Activated B cell treated with CpG ODN at 0.5 μM for 24 hours (primary cell): ENCODE measurements at regions of chr15 and their contacts with region 1.

Region 1: GRCh38 chr15:40440743-40441564 is at the start of gene BAHD1:
- DNase-seq: peak; percentile 93
- ATAC-seq: peak; percentile 92
- H3K4me3 Mint-ChIP-seq: peak within 1 kb of the TSS; percentile 88
- H3K27ac Mint-ChIP-seq: peak within 1 kb of the TSS; percentile 68
- H3K4me1 Mint-ChIP-seq: peaks cover 59% of the 10 kb centered on the region
- H3K27me3 Mint-ChIP-seq: peaks cover 22% of the 10 kb centered on the region
- CTCF ChIP-seq: no peak
- total RNA-seq, gene BAHD1: 27.5 and 28.4 TPM in 2 replicates

Region 2: DNA sequence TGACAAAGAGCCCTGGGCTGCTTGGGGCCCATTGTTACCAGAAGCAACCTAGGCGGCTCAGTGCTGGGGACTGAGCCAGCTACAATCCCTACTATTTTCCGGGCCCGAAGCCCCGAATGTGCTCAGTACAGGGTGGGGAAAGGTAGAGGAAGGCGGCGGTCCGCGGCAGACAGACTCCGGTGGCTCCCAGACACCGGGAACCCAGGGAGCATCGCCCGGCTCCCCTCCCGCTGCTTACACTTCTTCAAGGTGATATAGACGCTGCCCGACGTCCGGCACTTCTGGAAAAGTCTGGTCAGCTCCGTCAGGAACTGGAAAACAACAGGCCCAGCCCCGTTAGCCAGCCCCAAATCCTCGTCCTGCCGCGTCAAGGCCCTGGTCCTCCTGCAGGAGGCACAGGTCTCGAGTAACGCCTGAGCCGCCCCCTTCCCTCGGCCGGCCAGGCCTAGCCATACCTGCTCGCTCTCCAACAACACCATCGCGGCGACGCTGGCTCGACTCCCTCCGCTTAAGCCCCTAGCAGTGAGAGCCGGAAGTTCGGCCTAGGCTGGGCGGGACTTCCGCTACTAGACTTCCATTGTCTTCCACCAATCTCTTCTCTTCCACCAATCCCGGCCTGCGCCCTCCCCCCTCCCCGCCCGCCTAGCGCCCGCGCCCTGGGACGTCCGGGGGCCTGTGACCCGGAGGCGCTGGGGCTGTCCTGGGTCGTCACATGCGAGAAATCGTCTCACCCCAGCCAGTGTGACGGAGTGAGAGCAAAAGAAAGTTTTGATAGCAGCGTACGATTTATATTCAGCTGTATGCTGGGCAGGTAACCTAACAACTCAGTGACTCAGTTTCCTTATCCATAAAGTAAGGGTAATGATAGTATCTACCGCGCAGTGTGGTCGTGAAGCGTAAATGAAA is 402.1 kb before region 1 on chr15 and contains the start of gene SRP14:
- CTCF ChIA-PET with region 1: no interaction called
- POLR2A ChIA-PET with region 1: no interaction called
- intact Hi-C with region 1: loop called (anchors 5 kb)
- DNase-seq: peak; percentile 89
- ATAC-seq: peak; percentile 97
- H3K4me3 Mint-ChIP-seq: peak within 1 kb of the TSS; percentile 99
- H3K27ac Mint-ChIP-seq: peak within 1 kb of the TSS; percentile 95
- H3K4me1 Mint-ChIP-seq: peaks cover 30% of the 10 kb centered on the region
- H3K27me3 Mint-ChIP-seq: no peaks in the 10 kb centered on the region
- CTCF ChIP-seq: no peak
- total RNA-seq, gene SRP14: 183 and 217 TPM in 2 replicates

Region 3: DNA sequence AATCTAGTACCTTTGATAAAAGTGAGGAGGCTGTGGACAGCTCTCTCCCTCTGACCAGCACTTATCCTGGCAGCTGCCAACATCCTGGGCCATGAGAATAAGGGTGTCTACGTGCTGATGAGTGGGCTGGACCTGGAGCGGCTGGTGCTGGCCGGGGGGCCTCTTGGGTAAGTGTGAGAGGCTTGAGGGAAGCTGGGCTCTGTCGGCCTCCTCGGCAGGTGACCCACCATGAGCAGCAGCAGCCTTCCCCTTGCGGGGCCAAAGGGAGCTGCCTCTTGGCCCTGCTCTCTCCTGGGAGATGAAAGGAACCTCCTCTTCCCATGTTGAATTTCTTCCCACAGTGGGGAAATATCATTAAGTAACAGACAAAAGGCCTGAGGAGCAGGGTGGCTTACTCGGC is 26.1 kb before region 1 on chr15:
- CTCF ChIA-PET with region 1: no interaction called
- POLR2A ChIA-PET with region 1: interaction called, 12 read pairs
- intact Hi-C with region 1: no loop called
- DNase-seq: no peak
- ATAC-seq: no peak
- H3K4me3 Mint-ChIP-seq: no peak overlapping the region
- H3K27ac Mint-ChIP-seq: no peak overlapping the region
- H3K4me1 Mint-ChIP-seq: no peaks in the 10 kb centered on the region
- H3K27me3 Mint-ChIP-seq: no peaks in the 10 kb centered on the region
- CTCF ChIP-seq: no peak

Region 4: DNA sequence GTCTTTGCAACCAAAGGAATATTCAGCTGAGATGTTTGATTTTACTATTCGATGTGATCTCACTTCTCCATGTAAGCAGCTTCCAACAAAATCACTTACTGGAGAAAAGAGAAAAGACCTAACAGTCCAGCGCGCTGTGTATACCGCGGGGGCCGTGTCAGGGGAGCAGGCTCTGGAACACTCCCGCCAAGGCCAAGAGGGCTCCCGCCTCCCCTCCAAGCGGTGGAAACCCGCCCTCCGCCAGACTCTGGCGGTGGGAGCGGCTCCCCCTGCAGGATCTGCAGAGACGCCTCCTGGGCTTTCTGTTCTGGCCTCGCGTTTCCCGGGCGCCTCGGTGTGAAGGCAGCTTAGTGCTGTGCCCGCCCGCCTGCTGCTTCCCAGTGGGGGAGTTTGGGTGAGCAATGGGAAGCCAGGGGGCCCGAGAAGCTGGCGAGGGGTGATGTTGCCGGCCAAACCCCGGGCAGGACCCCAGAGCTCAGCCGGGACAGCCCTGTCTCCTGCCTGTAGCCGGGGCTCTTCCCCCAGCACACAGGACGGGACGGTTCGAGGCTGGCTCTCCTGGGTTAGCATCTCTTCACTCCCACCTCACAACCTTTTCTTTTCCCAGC is 66.1 kb after region 1 on chr15:
- CTCF ChIA-PET with region 1: no interaction called
- POLR2A ChIA-PET with region 1: interaction called, 4 read pairs
- intact Hi-C with region 1: loop called (anchors 2 kb)
- DNase-seq: peak; percentile 49
- ATAC-seq: peak; percentile 45
- H3K4me3 Mint-ChIP-seq: peak overlapping the region; percentile 51
- H3K27ac Mint-ChIP-seq: no peak overlapping the region
- H3K4me1 Mint-ChIP-seq: peaks cover 25% of the 10 kb centered on the region
- H3K27me3 Mint-ChIP-seq: peaks cover 37% of the 10 kb centered on the region
- CTCF ChIP-seq: no peak

Region 5: GRCh38 chr15:40807028-40807887 is 366.3 kb after region 1 on chr15 and contains the starts of genes DNAJC17 and ZFYVE19:
- CTCF ChIA-PET with region 1: no interaction called
- POLR2A ChIA-PET with region 1: no interaction called
- intact Hi-C with region 1: loop called (anchors 1 kb)
- DNase-seq: peak; percentile 87
- ATAC-seq: peak; percentile 96
- H3K4me3 Mint-ChIP-seq: peak within 1 kb of the TSS; percentile 99
- H3K27ac Mint-ChIP-seq: peak within 1 kb of the TSS; percentile 100
- H3K4me1 Mint-ChIP-seq: peaks cover 24% of the 10 kb centered on the region
- H3K27me3 Mint-ChIP-seq: no peaks in the 10 kb centered on the region
- CTCF ChIP-seq: no peak
- total RNA-seq, gene DNAJC17: 43.1 and 51.0 TPM in 2 replicates
- total RNA-seq, gene ZFYVE19: 23.2 and 25.2 TPM in 2 replicates